BJ (cell line): ENCODE measurements at regions of chr6 and their contacts with region 1.

Region 1: GRCh38 chr6:32153564-32154513 is at the start of gene PPT2:
- DNase-seq: peak; percentile 60
- H3K4me3 ChIP-seq: peak within 1 kb of the TSS; percentile 71
- H3K27me3 ChIP-seq: no peaks in the 10 kb centered on the region
- CTCF ChIP-seq: peak; percentile 43
- polyA plus RNA-seq, gene PPT2: 24.2 and 31.9 TPM in 2 replicates

Region 2: DNA sequence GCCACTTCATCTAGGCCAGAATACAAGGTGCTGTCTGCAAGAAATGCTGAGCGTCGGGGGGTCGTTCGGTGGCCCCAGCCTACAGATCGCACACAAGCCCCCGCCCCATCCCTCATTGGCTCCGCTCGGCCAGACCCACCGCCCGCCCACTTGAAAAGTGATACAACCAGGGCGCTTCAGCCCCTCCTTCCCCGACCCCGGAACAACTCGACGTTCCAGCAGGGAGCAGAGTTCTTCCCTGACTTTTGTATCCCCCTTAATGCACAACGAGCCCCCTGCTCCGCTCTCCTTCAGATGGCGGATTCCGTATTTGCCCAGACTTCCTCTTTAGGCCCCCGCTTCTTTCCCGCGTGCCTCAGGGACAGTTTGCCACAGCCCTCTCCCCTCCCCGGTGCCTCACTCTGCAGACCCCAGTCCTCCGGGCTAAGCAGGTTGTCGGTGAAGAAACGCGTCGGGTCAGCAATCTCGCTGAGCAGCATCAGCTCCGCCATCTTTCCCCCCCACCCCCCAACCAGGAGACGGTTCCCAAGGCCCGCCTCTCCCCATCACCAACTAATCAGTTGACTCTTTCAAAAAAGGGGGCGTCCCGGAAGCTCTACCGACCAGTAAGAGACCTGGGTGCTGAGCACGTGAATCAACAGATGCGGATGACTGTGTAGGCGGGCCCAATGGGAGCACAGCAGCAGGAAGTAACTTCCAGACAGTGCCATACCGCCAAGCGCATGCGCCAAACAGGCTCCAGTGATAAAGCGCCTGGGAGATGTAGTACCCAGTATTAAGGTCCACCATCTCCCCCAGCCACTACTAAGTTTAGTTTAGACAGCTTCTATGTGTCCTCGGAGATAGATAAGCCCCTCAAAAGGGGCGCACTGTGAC is 25.9 kb before region 1 on chr6 and contains the start of gene ATF6B:
- CTCF ChIA-PET with region 1: interaction called, 11 read pairs
- POLR2A ChIA-PET with region 1: no interaction called
- DNase-seq: peak; percentile 99
- H3K4me3 ChIP-seq: peak within 1 kb of the TSS; percentile 79
- H3K27me3 ChIP-seq: no peaks in the 10 kb centered on the region
- CTCF ChIP-seq: no peak
- polyA plus RNA-seq, gene ATF6B: 46.5 and 69.2 TPM in 2 replicates

Region 3: DNA sequence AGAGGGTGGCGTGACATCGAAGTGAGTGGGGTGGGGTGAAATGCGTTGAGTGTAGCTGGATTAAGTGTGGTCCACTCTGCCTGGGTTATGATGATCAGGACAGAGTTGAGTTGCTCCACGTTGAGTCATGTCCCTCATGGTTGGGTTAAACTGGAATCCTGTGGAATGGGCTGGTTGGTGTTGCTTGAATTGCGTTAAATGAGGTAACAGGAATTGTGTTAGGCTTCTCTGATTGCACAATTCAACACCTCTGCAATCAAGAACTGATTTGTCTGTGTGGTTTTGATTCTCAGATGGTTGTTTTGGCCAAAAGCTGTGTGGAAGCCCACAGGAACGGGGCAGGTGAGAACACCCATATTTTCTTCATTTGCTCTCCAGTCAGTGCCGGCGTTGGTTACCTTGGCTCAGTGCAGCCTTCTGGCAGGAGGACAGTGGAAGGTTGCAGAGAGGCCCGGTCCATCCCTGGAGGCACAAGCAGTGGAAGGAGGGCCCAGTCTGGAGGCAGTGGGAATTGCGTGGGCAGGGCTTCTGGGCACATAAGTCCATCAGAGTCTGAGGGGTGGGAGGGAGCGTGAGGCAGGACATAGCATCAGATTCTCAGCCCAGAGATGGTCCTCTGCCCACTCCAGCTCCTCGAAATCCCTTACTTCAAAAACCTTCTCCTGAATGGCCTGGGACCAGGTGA is 58.4 kb after region 1 on chr6:
- CTCF ChIA-PET with region 1: no interaction called
- POLR2A ChIA-PET with region 1: no interaction called
- DNase-seq: no peak
- H3K4me3 ChIP-seq: no peak overlapping the region
- H3K27me3 ChIP-seq: peaks cover 8% of the 10 kb centered on the region; the same call in 1 of the 2 replicates
- CTCF ChIP-seq: no peak